Mammary epithelial cell (primary cell): ENCODE measurements at regions of chr20 and their contacts with region 1.

Region 1: DNA sequence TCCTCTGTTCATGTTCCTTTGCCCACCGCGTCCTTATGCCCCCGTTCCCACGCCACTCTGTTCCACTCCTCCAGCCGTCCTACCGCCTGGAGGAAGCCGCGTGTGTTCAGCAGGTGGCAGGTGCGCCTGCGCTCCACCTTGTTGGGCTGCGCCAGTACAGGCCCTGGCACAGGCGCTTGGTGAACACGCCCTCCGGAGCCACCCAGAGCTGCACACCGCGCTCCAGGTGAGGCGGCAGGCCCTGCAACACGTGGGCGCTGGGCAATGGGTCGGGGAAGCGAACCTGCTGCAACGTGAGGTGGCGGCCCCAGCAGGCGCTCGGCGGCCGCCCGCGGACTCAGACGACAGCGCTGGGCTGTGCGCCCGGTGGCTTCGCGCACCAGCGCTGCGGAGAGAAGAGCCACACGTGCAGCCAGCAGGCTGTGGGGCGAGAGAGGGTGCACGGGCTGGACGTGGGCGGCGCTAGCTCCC is 4.1 kb upstream of the FOXS1 start:
- DNase-seq: peak; percentile 22
- H3K4me3 ChIP-seq: no peak overlapping the region
- H3K27ac ChIP-seq: no peak overlapping the region
- H3K4me1 ChIP-seq: peaks cover 17% of the 10 kb centered on the region
- H3K27me3 ChIP-seq: peaks cover 10% of the 10 kb centered on the region
- CTCF ChIP-seq: no peak

Region 2: DNA sequence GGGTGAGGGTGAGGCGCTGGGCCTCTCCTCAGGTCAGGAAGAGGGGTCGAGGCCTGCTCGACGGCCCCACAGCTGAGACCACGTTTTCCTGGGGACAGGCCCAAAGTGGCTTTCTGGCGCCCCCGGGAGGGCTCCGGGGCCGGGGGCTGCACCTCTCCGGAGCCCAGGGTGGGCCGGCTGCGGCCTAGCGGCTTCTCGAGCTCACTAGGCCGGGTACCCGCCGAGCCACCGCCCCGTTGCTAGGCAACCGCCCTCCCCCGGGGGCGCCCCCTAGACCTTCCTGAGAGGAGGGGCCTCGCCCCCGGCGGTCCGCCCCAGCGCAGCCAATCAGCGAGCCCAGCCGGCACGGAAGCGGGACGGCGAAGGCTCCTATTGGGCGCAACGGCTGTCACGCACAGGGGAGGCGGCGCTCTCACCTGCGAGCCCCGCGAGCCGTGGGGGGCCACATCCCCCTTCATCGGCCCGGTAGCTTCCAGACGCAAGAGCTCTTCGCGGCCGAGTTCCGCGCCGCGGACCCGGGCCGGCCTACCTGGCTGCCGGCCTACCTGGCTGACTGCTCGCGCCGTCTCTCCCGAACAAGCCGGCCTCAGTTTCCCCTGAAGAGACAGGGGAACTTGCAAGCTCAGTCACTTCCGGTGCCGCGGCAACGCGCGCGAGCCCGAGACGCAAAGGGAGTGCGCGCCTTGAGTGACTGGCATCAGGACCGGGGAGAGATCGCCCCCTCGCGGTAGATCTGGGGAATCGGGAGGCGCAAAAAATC is 126.0 kb before region 1 on chr20:
- CTCF ChIA-PET with region 1: no interaction called
- dilution Hi-C with region 1: no loop called
- in situ Hi-C with region 1: no loop called
- intact Hi-C with region 1: no loop called
- DNase-seq: peak; percentile 96
- H3K4me3 ChIP-seq: peak overlapping the region; percentile 78 to 89 (median 86)
- H3K27ac ChIP-seq: peak overlapping the region; percentile 89
- H3K4me1 ChIP-seq: peaks cover 26% of the 10 kb centered on the region
- H3K27me3 ChIP-seq: no peaks in the 10 kb centered on the region
- CTCF ChIP-seq: peak; percentile 89 to 93

Region 3: DNA sequence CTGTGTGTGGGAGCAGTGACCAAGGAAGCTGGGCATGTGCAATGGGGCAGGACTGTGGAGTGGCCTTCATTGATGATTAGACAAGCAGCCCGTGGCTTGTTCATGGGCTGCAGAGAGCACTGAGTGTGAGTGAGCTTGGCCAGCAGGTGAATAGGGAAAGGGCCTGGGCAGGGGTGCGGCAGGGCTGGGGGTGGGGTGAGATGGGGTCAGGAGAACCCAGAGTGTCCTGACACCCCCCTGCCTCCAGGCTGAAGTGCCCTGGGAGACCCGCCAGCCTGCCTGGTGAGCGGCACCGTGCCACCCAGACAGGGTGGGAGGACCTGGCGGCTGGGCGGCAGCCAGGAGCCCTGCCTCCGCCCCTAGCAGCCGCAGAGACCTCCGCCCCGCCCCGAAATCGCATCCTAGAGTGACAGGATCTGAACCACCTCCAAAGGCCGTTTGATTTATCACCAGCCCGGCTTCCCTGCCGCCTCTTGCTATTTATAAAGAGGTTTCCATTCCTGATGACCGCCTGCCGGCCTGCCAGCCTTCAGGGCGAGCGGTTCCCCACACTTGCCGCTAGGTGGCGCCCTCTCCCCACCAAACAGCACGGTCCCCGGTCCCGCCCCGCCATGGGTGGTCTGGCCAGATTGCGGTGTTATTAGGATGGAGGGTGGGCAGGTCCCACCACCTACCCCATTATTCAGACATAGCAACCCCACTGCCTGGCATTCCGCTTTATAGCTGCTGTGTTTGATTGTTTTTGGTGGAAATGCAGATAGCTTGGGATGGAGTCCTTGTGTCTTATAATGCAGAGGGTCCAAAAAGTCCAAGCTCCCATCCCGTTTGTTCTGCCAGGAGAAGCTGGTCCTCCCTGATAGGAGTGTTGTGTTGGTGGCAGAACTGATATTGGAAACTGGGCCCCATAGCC is 26.8 kb before region 1 on chr20:
- CTCF ChIA-PET with region 1: interaction called, 4 read pairs
- dilution Hi-C with region 1: no loop called
- in situ Hi-C with region 1: no loop called
- intact Hi-C with region 1: loop called (anchors 1 kb)
- DNase-seq: peak; percentile 29
- H3K4me3 ChIP-seq: no peak overlapping the region
- H3K27ac ChIP-seq: no peak overlapping the region
- H3K4me1 ChIP-seq: no peaks in the 10 kb centered on the region
- H3K27me3 ChIP-seq: no peaks in the 10 kb centered on the region
- CTCF ChIP-seq: peak; percentile 78 to 96

Region 4: GRCh38 chr20:31894980-31895675 is 45.6 kb after region 1 on chr20:
- CTCF ChIA-PET with region 1: interaction called, 12 read pairs
- dilution Hi-C with region 1: no loop called
- in situ Hi-C with region 1: no loop called
- intact Hi-C with region 1: no loop called
- DNase-seq: peak; percentile 48
- H3K4me3 ChIP-seq: no peak overlapping the region
- H3K27ac ChIP-seq: no peak overlapping the region
- H3K4me1 ChIP-seq: no peaks in the 10 kb centered on the region
- H3K27me3 ChIP-seq: no peaks in the 10 kb centered on the region
- CTCF ChIP-seq: no peak

Region 5: GRCh38 chr20:31951530-31952453 is 102.3 kb after region 1 on chr20 and contains the start of gene PDRG1:
- CTCF ChIA-PET with region 1: interaction called, 11 read pairs
- dilution Hi-C with region 1: no loop called
- in situ Hi-C with region 1: loop called in 1 of 2 experiments (anchors 10 kb)
- intact Hi-C with region 1: loop called (anchors 1 kb)
- DNase-seq: peak; percentile 90
- H3K4me3 ChIP-seq: peak within 1 kb of the TSS; percentile 80 to 98 (median 86)
- H3K27ac ChIP-seq: peak within 1 kb of the TSS; percentile 40
- H3K4me1 ChIP-seq: peaks cover 8% of the 10 kb centered on the region
- H3K27me3 ChIP-seq: no peaks in the 10 kb centered on the region
- CTCF ChIP-seq: peak; percentile 84 to 96
- total RNA-seq, gene PDRG1: 5.0 to 15.6 TPM

Region 6: GRCh38 chr20:32018269-32019074 is 169.0 kb after region 1 on chr20:
- CTCF ChIA-PET with region 1: interaction called, 10 read pairs
- dilution Hi-C with region 1: no loop called
- in situ Hi-C with region 1: no loop called
- intact Hi-C with region 1: no loop called
- DNase-seq: peak; percentile 19
- H3K4me3 ChIP-seq: peak overlapping the region; percentile 20 to 49 (median 40)
- H3K27ac ChIP-seq: no peak overlapping the region
- H3K4me1 ChIP-seq: peaks cover 10% of the 10 kb centered on the region
- H3K27me3 ChIP-seq: peaks cover 23% of the 10 kb centered on the region
- CTCF ChIP-seq: no peak

Region 7: DNA sequence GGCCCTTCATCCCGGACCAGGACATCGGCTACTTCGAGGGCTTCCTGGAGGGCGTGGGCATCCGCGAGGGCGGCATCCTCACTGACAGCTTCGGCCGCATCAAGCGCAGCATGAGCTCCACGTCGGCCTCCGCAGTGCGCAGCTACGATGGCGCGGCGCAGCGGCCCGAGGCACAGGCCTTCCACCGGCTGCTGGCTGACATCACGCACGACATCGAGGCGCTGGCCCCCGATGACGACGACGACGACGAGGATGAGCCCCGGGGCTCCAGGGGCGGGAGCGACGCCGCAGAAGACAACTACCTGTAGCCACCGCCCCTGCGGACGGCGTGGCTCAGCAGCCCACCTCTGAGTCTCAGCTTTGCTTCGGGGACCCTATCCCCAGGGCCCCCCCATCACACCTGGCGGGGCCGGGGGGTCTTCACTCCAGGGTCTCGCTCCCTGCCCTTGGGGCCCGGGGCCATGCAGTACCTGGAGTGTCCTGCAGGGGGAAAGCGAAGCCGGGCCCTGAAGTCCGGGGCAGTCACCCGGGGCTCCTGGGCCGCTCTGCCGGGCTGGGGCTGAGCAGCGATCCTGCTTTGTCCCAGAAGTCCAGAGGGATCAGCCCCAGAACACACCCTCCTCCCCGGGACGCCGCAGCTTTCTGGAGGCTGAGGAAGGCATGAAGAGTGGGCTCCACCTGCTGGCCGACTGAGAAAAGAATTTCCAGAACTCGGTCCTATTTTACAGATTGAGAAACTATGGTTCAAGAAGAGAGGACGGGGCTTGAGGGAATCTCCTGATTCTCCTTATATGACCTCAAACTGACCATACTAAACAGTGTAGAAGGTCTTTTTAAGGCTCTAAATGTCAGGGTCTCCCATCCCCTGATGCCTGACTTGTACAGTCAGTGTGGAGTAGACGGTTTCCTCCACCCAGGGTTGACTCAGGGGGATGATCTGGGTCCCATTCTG is 181.8 kb after region 1 on chr20:
- CTCF ChIA-PET with region 1: interaction called, 10 read pairs
- dilution Hi-C with region 1: no loop called
- in situ Hi-C with region 1: no loop called
- intact Hi-C with region 1: loop called (anchors 1 kb)
- DNase-seq: peak; percentile 66
- H3K4me3 ChIP-seq: peak overlapping the region in 1 of 3 experiments; percentile 23
- H3K27ac ChIP-seq: no peak overlapping the region
- H3K4me1 ChIP-seq: peaks cover 5% of the 10 kb centered on the region
- H3K27me3 ChIP-seq: peaks cover 3% of the 10 kb centered on the region
- CTCF ChIP-seq: peak; percentile 72 to 88

Region 8: DNA sequence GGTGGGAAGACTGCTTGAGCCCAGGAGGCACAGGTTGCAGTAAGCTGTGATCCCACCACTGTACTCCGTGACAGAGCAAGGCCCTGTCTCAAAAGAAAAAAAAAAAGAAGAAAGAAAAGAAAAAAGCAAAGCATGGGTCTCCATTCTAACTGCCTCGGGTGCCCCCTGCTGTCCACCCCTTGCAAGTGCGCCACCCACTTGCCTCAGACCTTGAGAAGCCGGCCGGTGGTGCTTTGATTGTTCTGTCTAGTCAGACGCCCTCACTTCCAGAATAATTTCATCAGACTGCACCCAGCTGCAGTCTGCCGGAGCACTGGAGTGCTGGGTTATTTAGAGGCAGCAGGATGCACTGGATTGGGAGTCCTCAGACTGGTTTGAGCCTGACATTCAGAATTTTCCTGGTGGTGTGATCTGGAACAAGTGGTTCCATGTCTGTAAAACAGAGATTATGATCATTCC is 242.4 kb after region 1 on chr20:
- CTCF ChIA-PET with region 1: interaction called, 6 read pairs
- dilution Hi-C with region 1: no loop called
- in situ Hi-C with region 1: no loop called
- intact Hi-C with region 1: loop called (anchors 1 kb)
- DNase-seq: peak; percentile 57
- H3K4me3 ChIP-seq: no peak overlapping the region
- H3K27ac ChIP-seq: no peak overlapping the region
- H3K4me1 ChIP-seq: no peaks in the 10 kb centered on the region
- H3K27me3 ChIP-seq: no peaks in the 10 kb centered on the region
- CTCF ChIP-seq: peak; percentile 92 to 95